Psoas muscle (tissue), 8 donors: ENCODE measurements at regions of chr5 and their contacts with region 1.

Region 1: GRCh38 chr5:5492087-5492933 is 69.8 kb downstream of the ICE1 start:
- DNase-seq: no peak
- ATAC-seq: peak in 3 of 4 donors; percentile 37 to 58 (median 54)
- H3K4me3 ChIP-seq: no peak overlapping the region
- H3K27ac ChIP-seq: no peak overlapping the region
- H3K4me1 ChIP-seq: peaks cover 46% of the 10 kb centered on the region
- H3K27me3 ChIP-seq: no peaks in the 10 kb centered on the region
- CTCF ChIP-seq: peak; percentile 71

Region 2: DNA sequence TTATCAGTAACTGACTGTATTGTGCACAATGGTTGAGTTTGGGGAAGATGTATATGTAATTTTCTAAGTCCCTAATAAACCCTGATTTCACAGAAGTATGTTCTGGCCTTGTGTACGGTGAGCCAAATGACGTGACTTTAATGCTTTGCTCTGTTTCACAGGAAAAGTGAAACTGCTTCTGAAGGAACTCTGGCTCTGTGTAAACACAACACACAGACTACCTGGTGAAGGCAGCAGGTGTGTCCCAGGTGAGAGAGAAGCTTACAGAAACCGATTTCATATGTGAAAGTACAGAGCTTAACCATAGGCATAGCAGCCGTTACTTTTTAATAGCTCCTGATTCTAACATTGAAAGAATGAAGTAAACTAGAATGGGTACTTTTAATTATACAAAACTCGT is 37.9 kb before region 1 on chr5:
- intact Hi-C with region 1: no loop called
- DNase-seq: no peak
- ATAC-seq: no peak
- H3K4me3 ChIP-seq: no peak overlapping the region
- H3K27ac ChIP-seq: no peak overlapping the region
- H3K4me1 ChIP-seq: no peaks in the 10 kb centered on the region
- H3K27me3 ChIP-seq: no peaks in the 10 kb centered on the region
- CTCF ChIP-seq: no peak

Region 3: GRCh38 chr5:5658226-5658625 is 165.9 kb after region 1 on chr5:
- intact Hi-C with region 1: loop called in 1 of 2 experiments (anchors 10 kb)
- DNase-seq: peak; percentile 34 to 62
- ATAC-seq: peak; percentile 95 to 100 (median 98)
- H3K4me3 ChIP-seq: peak overlapping the region; percentile 44
- H3K27ac ChIP-seq: peak overlapping the region; percentile 76
- H3K4me1 ChIP-seq: peaks cover 16% of the 10 kb centered on the region
- H3K27me3 ChIP-seq: no peaks in the 10 kb centered on the region
- CTCF ChIP-seq: no peak

Region 4: GRCh38 chr5:5881294-5881693 is 389.0 kb after region 1 on chr5:
- intact Hi-C with region 1: loop called (anchors 5 to 10 kb)
- DNase-seq: no peak
- ATAC-seq: peak in 1 of 4 donors; percentile 39
- H3K4me3 ChIP-seq: no peak overlapping the region
- H3K27ac ChIP-seq: no peak overlapping the region
- H3K4me1 ChIP-seq: no peaks in the 10 kb centered on the region
- H3K27me3 ChIP-seq: peaks cover 0 to 3% (median 0%) of the 10 kb centered on the region in 3 donors
- CTCF ChIP-seq: peak; percentile 13

Region 5: DNA sequence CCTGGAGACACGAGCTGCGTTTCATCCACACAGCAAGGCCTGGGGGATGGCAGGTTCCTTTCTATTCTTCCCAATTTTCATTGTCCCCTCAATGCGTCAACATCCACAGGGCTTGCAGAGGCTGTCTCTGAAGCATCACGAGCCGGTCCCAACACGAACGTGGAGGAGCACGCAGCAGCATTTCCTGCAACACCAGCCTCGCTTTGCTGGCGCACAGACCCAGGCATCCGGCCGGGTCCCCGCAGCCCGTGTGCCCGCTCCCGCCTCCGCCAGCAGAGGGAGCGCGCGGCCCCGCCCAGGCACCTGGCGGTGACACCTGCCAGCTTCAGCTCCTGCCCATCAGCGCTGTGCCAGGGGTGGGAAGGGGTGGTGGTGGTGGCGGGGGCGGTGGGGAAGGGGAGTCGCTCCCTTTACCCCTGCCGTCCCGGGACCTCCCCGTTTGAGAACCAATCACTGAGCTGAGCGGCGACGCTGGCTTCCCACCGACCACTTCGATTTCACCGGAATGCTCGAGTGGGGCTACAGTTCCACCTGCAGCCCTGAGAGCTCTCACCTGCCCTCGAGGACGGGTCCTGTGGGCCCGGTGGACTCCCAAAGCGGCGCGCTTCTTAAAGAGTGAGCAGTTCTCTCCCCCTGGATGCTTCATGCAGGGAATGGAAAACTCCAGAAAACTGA is 394.6 kb after region 1 on chr5:
- intact Hi-C with region 1: loop called (anchors 5 to 10 kb)
- DNase-seq: peak; percentile 22 to 60
- ATAC-seq: peak; percentile 74 to 92 (median 79)
- H3K4me3 ChIP-seq: peak overlapping the region; percentile 30
- H3K27ac ChIP-seq: no peak overlapping the region
- H3K4me1 ChIP-seq: no peaks in the 10 kb centered on the region
- H3K27me3 ChIP-seq: no peaks in the 10 kb centered on the region
- CTCF ChIP-seq: peak; percentile 66

Region 6: DNA sequence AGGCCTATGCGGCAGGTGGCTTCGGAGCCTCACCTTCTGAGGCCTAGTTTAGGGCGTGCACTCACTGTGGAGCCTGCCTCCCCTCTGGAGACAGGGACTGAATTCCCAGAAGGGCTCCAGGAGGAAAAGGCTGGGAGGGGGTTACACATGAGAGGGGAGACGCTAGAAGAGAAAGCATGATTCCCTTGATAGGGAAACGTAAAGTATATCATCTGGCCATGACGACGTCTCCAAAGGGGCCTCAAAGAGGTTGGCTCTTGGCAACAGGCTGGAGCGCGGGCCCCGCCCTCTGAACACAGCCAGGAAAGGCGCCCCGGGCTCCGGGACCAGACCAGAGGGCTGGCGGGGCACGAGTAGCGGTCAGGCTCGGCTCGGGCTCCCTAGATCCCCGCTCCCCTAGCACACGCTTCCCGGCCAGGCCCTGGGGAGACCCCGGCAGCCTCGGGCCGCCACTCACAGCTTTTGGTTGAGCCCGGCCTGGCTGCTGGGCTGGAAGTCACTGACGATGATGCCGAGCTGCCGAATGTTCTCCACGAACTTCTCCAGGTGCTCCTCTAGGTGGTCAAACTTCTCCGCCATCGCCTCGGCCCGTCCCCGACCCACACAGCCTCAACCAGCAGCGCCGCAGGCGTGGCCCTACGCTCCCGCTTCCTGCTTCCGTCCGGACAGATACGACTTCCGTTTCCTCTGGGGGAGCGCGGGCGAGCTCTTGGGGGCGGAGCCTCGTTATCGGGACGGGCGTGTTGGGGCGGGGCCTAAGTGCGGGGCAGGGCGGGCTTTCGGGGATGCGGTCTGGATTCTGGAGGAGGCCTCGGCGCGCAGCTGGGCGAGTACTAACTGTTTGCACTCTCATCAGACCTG is 885.8 kb after region 1 on chr5 and contains the start of gene MED10:
- intact Hi-C with region 1: loop called in 1 of 2 experiments (anchors 10 kb)
- DNase-seq: peak; percentile 95 to 98
- ATAC-seq: peak; percentile 99 to 100 (median 100)
- H3K4me3 ChIP-seq: peak within 1 kb of the TSS; percentile 98
- H3K27ac ChIP-seq: peak within 1 kb of the TSS; percentile 95
- H3K4me1 ChIP-seq: peaks cover 9% of the 10 kb centered on the region
- H3K27me3 ChIP-seq: no peaks in the 10 kb centered on the region
- CTCF ChIP-seq: no peak
- total RNA-seq, gene MED10: 18.8 to 52.4 (median 26.5) TPM

Region 7: GRCh38 chr5:6583049-6583880 is 1091.0 kb after region 1 on chr5:
- intact Hi-C with region 1: loop called (anchors 5 kb)
- DNase-seq: peak; percentile 36 to 67
- ATAC-seq: peak; percentile 78 to 94 (median 88)
- H3K4me3 ChIP-seq: peak overlapping the region; percentile 65
- H3K27ac ChIP-seq: no peak overlapping the region
- H3K4me1 ChIP-seq: no peaks in the 10 kb centered on the region
- H3K27me3 ChIP-seq: peaks cover 0 to 9% (median 0%) of the 10 kb centered on the region in 3 donors
- CTCF ChIP-seq: peak; percentile 45